ENCODE measurements at regions of chr4 and their contacts with region 1.

Region 1: DNA sequence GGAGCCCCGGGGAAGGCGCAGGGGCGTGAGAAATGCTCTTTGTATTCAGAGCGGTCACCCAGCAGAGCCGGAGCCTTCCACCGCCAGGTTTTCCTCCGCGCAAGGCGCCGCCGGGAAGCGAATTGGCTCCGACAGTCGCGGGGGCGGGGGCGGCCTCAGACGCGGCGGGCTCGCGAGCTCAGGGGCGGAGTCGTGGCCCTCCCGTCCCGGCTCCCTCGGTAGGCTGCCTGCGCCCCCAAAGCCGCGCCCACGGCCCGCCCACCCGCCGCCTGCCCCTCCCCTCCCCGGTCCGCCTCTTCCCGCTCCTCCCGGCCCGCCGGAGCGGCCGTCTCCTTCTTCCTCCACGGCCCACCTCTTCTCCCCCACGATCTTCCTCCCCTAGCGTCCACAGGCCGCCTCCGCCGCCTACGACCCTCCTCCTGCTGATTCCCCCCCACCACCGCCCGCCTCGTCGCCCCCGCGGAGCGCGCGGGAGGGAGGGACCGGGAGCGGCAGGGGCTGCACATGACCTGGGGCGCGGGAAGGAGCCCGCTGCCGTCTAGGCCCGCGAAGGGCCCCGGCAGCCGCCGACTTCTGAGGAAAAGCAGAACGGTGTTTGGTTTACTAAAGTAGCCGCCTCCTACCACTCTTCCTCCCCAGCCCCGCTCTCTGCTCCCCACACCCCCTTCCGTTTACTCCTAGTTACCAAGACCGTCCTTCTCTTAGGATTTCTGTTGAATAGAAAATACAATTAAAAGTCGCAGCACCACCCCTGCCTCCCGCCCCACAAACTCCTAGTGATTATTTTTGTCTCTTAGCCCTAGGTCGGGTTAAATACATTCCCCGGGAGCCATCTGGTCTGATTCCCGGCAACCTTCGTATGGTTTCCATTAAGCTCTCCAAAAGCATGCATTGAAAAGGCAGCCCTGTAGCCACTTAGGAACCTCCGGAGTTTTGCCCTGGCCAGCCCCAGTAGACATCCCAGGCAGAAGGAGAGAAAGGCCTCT is 53.2 kb downstream of the C4orf51 start:
- DNase-seq: peak; percentile 89
- ATAC-seq: peak; percentile 80
- H3K4me3 ChIP-seq: peak overlapping the region; percentile 57
- H3K27ac ChIP-seq: peak overlapping the region; percentile 92
- H3K4me1 ChIP-seq: peaks cover 28% of the 10 kb centered on the region
- H3K27me3 ChIP-seq: no peaks in the 10 kb centered on the region
- CTCF ChIP-seq: no peak
- POLR2A ChIP-seq: peak; percentile 75
- RAD21 ChIP-seq: no peak

Region 2: GRCh38 chr4:145216535-145216934 is 516.7 kb before region 1 on chr4:
- CTCF ChIA-PET with region 1: no interaction called
- POLR2A ChIA-PET with region 1: no interaction called
- dilution Hi-C with region 1: no loop called
- in situ Hi-C with region 1: no loop called
- intact Hi-C with region 1: loop called (anchors 10 kb)
- DNase-seq: peak; percentile 44
- ATAC-seq: no peak
- H3K4me3 ChIP-seq: no peak overlapping the region
- H3K27ac ChIP-seq: no peak overlapping the region
- H3K4me1 ChIP-seq: no peaks in the 10 kb centered on the region
- H3K27me3 ChIP-seq: peaks cover 3% of the 10 kb centered on the region; the same call in 1 of the 2 replicates
- CTCF ChIP-seq: peak; percentile 79
- POLR2A ChIP-seq: no peak
- RAD21 ChIP-seq: peak; percentile 84

Region 3: GRCh38 chr4:145679520-145679919 is 53.7 kb before region 1 on chr4:
- CTCF ChIA-PET with region 1: no interaction called
- POLR2A ChIA-PET with region 1: no interaction called
- dilution Hi-C with region 1: no loop called
- in situ Hi-C with region 1: no loop called
- intact Hi-C with region 1: loop called (anchors 2 kb)
- DNase-seq: peak; percentile 97
- ATAC-seq: peak; percentile 97
- H3K4me3 ChIP-seq: no peak overlapping the region
- H3K27ac ChIP-seq: no peak overlapping the region
- H3K4me1 ChIP-seq: peaks cover 2% of the 10 kb centered on the region; the same call in 1 of the 2 replicates
- H3K27me3 ChIP-seq: no peaks in the 10 kb centered on the region
- CTCF ChIP-seq: no peak
- POLR2A ChIP-seq: 0 out of 2 replicates have a peak, but pooled peaks have one; percentile 10
- RAD21 ChIP-seq: no peak

Region 4: DNA sequence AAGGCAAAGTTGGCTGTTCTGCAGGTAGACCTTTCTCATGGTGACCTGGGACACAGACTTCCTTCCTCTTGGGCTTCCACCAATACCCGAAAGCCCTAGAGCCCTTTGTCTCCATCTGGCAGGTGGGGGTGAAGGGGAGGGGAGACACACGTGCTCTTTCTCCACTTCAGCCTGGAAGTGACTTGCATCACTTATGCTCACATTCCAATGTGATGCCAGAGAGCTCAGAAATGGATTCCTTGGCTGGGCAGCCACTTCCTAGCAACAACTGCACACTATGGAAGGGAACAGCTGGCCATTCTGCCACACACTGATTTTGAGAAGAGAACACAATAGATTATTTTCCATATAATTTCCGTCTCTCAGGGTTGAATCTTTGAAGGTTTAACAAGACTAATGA is 17.0 kb before region 1 on chr4:
- CTCF ChIA-PET with region 1: no interaction called
- POLR2A ChIA-PET with region 1: interaction called, 5 read pairs
- dilution Hi-C with region 1: no loop called
- in situ Hi-C with region 1: no loop called
- intact Hi-C with region 1: loop called (anchors 2 kb)
- DNase-seq: peak; percentile 54
- ATAC-seq: peak; percentile 64
- H3K4me3 ChIP-seq: no peak overlapping the region
- H3K27ac ChIP-seq: no peak overlapping the region
- H3K4me1 ChIP-seq: 0 out of 2 replicates have a peak, but pooled peaks cover 2% of the 10 kb centered on the region
- H3K27me3 ChIP-seq: no peaks in the 10 kb centered on the region
- CTCF ChIP-seq: no peak
- POLR2A ChIP-seq: no peak
- RAD21 ChIP-seq: no peak

Region 5: GRCh38 chr4:145808021-145808650 is 74.9 kb after region 1 on chr4:
- CTCF ChIA-PET with region 1: no interaction called
- POLR2A ChIA-PET with region 1: no interaction called
- dilution Hi-C with region 1: no loop called
- in situ Hi-C with region 1: loop called (anchors 5 kb)
- intact Hi-C with region 1: loop called (anchors 2 kb)
- DNase-seq: peak; percentile 98
- ATAC-seq: peak; percentile 79
- H3K4me3 ChIP-seq: no peak overlapping the region
- H3K27ac ChIP-seq: peak overlapping the region; percentile 85
- H3K4me1 ChIP-seq: peaks cover 8% of the 10 kb centered on the region
- H3K27me3 ChIP-seq: no peaks in the 10 kb centered on the region
- CTCF ChIP-seq: no peak
- POLR2A ChIP-seq: no peak
- RAD21 ChIP-seq: no peak

Region 6: DNA sequence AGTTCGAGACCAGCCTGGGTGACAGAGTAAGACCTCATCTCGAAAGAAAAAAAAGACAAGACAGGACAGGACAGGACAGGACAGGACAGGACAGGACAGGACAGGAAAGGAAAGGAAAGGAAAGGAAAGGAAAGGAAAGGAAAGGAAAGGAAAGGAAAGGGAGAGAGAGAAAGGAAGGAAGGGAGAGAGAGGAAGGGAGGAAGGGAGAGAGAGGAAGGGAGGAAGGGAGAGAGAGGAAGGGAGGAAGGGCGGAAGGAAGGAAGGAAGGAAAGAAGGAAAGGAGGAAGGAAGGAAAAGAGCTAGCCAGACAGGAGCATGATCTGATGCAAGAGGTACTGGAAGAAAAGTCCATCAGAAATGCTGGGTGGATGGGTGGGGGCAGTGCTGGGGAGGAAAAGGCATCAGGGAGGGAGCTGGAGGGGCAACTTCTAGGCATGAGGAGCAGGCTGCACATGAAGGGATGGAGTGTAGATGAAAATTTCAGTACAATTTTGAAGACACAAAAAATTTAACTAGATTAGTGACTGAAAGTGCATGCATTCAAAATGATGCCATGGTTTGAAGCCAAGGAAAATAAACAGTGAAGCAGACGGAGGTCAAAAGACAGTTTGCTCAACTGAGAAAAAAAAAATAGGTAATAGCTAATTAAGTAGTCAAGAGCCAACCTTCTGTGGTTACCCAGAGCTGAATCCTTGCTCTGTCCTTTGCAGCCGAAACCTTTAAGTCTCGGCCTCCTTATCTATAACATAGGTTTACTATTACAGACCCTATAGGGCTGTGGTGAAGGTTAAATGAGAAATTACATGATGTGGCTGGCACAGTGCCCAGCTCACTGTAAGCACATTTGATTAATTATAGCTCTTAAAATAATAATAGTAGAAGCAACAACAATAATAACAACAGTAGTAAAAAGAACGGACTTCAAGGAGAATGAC is 145.6 kb after region 1 on chr4:
- CTCF ChIA-PET with region 1: no interaction called
- POLR2A ChIA-PET with region 1: no interaction called
- dilution Hi-C with region 1: no loop called
- in situ Hi-C with region 1: no loop called
- intact Hi-C with region 1: loop called (anchors 5 kb)
- DNase-seq: peak; percentile 85
- ATAC-seq: peak; percentile 55
- H3K4me3 ChIP-seq: no peak overlapping the region
- H3K27ac ChIP-seq: no peak overlapping the region
- H3K4me1 ChIP-seq: peaks cover 8% of the 10 kb centered on the region
- H3K27me3 ChIP-seq: no peaks in the 10 kb centered on the region
- CTCF ChIP-seq: no peak
- POLR2A ChIP-seq: no peak
- RAD21 ChIP-seq: no peak